WTC11 (cell line): ENCODE measurements at regions of chr5 and their contacts with region 1.

Region 1: DNA sequence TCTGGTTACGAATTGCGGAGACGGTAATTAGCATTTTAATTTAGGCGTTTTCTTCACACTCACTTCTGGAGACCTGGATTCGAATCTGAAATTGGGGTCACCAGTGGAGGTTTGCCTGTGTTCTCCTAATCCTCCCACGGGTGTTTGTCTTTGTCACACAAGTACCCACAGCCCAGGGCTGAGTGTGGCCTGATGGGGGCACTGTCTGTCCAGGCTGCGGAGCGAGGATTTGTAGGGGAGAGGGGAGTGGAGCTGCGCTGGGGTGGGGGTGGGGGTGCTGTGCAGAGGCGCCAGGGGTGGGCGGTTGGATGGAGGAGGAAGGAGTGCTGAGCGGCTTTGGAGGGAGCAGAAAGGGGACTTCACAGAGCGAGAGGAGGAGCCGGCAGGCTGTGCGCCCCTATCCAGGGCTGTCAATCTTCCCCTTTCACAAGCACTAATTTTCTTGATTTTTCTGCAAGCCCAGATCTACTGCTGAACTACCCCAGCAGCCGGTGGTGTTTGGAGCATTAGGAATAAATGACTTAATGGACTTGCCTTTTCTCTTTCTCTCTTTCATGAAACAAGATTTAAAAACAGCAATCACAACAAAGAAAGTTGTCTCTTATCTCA is 53.1 kb downstream of the TSPAN17 start:
- DNase-seq: peak; percentile 70
- ATAC-seq: peak; percentile 53
- H3K4me3 Mint-ChIP-seq: no peak overlapping the region; the same call in 1 of the 2 replicates
- H3K27ac Mint-ChIP-seq: peak overlapping the region; percentile 37; the same call in 1 of the 2 replicates
- H3K4me1 Mint-ChIP-seq: peaks cover 59% of the 10 kb centered on the region
- H3K27me3 Mint-ChIP-seq: peaks cover 7% of the 10 kb centered on the region
- CTCF ChIP-seq: no peak

Region 2: GRCh38 chr5:176670449-176670848 is 29.9 kb before region 1 on chr5:
- CTCF ChIA-PET with region 1: interaction called, 13 read pairs
- POLR2A ChIA-PET with region 1: no interaction called
- DNase-seq: no peak
- ATAC-seq: no peak
- H3K4me3 Mint-ChIP-seq: no peak overlapping the region
- H3K27ac Mint-ChIP-seq: no peak overlapping the region
- H3K4me1 Mint-ChIP-seq: peaks cover 27% of the 10 kb centered on the region
- H3K27me3 Mint-ChIP-seq: peaks cover 7% of the 10 kb centered on the region; the same call in 1 of the 2 replicates
- CTCF ChIP-seq: no peak

Region 3: GRCh38 chr5:176687881-176688280 is 12.5 kb before region 1 on chr5:
- CTCF ChIA-PET with region 1: interaction called, 16 read pairs
- POLR2A ChIA-PET with region 1: interaction called, 5 read pairs
- DNase-seq: peak; percentile 63
- ATAC-seq: peak; percentile 90
- H3K4me3 Mint-ChIP-seq: no peak overlapping the region
- H3K27ac Mint-ChIP-seq: no peak overlapping the region
- H3K4me1 Mint-ChIP-seq: peaks cover 43% of the 10 kb centered on the region
- H3K27me3 Mint-ChIP-seq: no peaks in the 10 kb centered on the region; the same call in none of the 2 replicates
- CTCF ChIP-seq: no peak

Region 4: DNA sequence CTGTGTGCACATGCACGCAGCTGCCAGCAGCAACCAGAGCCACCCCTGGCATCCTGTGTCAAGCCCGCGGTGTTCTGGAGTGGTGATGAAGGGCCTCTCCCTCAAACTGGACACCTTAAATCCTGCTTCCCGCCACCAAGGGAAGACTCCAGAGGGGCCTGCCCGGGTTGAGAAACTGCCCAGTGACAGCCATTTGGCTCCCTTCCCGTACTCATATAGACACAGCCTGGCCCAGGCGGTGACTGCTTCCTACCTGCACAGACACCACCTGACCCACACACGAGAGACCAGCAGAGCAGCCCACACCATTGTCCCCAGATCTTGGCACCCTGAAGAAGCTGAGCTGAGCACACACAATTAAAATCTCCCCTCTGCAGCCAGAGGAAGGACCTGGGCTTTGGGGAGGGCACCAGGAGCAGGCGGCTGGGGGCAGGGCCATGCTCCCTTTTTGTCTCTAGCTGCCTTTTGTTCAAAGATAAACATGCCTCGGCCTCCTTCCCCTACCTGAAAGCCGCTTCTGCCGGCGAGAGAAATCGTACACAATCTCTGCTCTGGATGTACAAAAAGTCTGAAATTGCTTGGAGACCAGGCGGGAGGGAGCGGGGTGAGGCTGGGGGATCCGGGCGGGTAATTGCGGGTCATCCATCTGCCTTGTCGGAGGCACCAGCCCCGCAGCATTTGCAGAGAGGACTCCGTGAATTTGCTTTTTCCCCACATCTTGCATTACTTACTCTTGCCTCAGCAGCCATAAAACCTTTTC is 25.4 kb after region 1 on chr5:
- CTCF ChIA-PET with region 1: interaction called, 17 read pairs
- POLR2A ChIA-PET with region 1: no interaction called
- DNase-seq: no peak
- ATAC-seq: peak; percentile 29
- H3K4me3 Mint-ChIP-seq: no peak overlapping the region
- H3K27ac Mint-ChIP-seq: no peak overlapping the region
- H3K4me1 Mint-ChIP-seq: peaks cover 30% of the 10 kb centered on the region
- H3K27me3 Mint-ChIP-seq: peaks cover 3% of the 10 kb centered on the region; the same call in 1 of the 2 replicates
- CTCF ChIP-seq: no peak

Region 5: GRCh38 chr5:176793337-176794138 is 93.2 kb after region 1 on chr5:
- CTCF ChIA-PET with region 1: interaction called, 12 read pairs
- POLR2A ChIA-PET with region 1: no interaction called
- DNase-seq: peak; percentile 50
- ATAC-seq: peak; percentile 93
- H3K4me3 Mint-ChIP-seq: no peak overlapping the region
- H3K27ac Mint-ChIP-seq: no peak overlapping the region
- H3K4me1 Mint-ChIP-seq: peaks cover 26% of the 10 kb centered on the region
- H3K27me3 Mint-ChIP-seq: no peaks in the 10 kb centered on the region; the same call in 1 of the 2 replicates
- CTCF ChIP-seq: no peak